ENCODE measurements at regions of chr12 and their contacts with region 1.

Region 1: DNA sequence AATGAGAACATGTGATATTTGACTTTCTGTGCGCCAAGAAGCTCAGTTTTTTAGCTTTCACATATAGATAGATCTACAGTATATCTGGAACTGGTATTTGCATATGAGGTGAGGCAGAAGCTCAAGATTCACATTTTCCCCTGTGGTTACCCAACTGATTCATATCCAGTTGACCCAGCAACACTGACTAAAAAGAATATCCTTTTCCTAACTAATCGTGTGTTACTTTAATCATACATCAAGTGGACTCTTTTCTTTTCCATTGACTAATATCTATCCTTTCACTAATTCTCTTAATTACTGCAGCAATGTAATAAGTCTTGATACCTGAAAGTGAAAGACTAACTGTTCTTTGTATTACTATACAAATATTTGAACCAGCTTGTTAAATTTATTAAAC is 236.1 kb downstream of the AEBP2 start:
- DNase-seq: no peak
- ATAC-seq: peak; percentile 89
- H3K4me3 Mint-ChIP-seq: no peak overlapping the region
- H3K27ac Mint-ChIP-seq: no peak overlapping the region
- H3K4me1 Mint-ChIP-seq: peaks cover 24% of the 10 kb centered on the region
- H3K27me3 Mint-ChIP-seq: no peaks in the 10 kb centered on the region

Region 2: GRCh38 chr12:19800884-19801283 is 125.5 kb after region 1 on chr12:
- CTCF ChIA-PET with region 1: no interaction called
- POLR2A ChIA-PET with region 1: no interaction called
- intact Hi-C with region 1: loop called in 1 of 2 experiments (anchors 5 kb)
- DNase-seq: no peak
- ATAC-seq: peak; percentile 97
- H3K4me3 Mint-ChIP-seq: no peak overlapping the region
- H3K27ac Mint-ChIP-seq: peak overlapping the region; percentile 58
- H3K4me1 Mint-ChIP-seq: peaks cover 18% of the 10 kb centered on the region
- H3K27me3 Mint-ChIP-seq: no peaks in the 10 kb centered on the region

Measured in activated CD4-positive, alpha-beta T cell treated with anti-CD3 and anti-CD28 coated beads for 36 hours (primary cell).